HEK293 (cell line): ENCODE measurements at regions of chr15 and their contacts with region 1.

Region 1: DNA sequence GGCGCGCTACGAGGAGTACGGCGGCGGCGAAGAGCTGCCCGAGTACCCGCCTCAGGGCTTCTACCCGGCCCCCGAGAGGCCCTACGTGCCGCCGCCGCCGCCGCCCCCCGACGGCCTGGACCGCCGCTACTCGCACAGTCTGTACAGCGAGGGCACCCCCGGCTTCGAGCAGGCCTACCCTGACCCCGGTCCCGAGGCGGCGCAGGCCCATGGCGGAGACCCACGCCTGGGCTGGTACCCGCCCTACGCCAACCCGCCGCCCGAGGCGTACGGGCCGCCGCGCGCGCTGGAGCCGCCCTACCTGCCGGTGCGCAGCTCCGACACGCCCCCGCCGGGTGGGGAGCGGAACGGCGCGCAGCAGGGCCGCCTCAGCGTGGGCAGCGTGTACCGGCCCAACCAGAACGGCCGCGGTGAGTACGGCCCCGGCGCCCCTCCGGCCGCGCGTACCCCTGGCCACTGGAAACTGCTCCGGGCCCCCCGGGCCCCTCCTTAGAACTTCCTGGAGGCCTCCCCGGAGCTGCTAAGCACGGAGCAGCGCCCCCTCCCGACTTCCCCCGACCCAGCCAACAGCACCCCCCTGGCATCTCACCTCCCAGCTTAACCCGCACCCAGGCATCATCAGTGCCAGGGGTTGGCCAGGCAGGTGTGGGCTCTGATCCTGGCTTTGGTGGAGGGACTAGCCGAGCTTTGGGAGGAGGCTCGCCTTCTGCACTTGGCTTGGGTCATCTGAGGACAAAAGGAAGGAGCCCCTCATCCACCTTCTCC is 1.4 kb downstream of the LOXL1 start:
- H3K4me3 ChIP-seq: peak overlapping the region; percentile 49
- H3K27ac ChIP-seq: peak overlapping the region; percentile 75; the same call in 1 of the 2 replicates
- H3K4me1 ChIP-seq: peaks cover 20% of the 10 kb centered on the region
- CTCF ChIP-seq: peak; percentile 95

Region 2: GRCh38 chr15:73771380-73772045 is 156.1 kb before region 1 on chr15:
- CTCF ChIA-PET with region 1: no interaction called
- POLR2A ChIA-PET with region 1: no interaction called
- H3K4me3 ChIP-seq: no peak overlapping the region
- H3K27ac ChIP-seq: no peak overlapping the region
- H3K4me1 ChIP-seq: no peaks in the 10 kb centered on the region
- CTCF ChIP-seq: no peak

Region 3: GRCh38 chr15:73873889-73874511 is 53.7 kb before region 1 on chr15:
- CTCF ChIA-PET with region 1: interaction called, 12 read pairs
- POLR2A ChIA-PET with region 1: interaction called, 3 read pairs
- H3K4me3 ChIP-seq: no peak overlapping the region
- H3K27ac ChIP-seq: no peak overlapping the region
- H3K4me1 ChIP-seq: peaks cover 5% of the 10 kb centered on the region; the same call in 1 of the 2 replicates
- CTCF ChIP-seq: 0 out of 2 replicates have a peak, but pooled peaks have one; percentile 13

Region 4: DNA sequence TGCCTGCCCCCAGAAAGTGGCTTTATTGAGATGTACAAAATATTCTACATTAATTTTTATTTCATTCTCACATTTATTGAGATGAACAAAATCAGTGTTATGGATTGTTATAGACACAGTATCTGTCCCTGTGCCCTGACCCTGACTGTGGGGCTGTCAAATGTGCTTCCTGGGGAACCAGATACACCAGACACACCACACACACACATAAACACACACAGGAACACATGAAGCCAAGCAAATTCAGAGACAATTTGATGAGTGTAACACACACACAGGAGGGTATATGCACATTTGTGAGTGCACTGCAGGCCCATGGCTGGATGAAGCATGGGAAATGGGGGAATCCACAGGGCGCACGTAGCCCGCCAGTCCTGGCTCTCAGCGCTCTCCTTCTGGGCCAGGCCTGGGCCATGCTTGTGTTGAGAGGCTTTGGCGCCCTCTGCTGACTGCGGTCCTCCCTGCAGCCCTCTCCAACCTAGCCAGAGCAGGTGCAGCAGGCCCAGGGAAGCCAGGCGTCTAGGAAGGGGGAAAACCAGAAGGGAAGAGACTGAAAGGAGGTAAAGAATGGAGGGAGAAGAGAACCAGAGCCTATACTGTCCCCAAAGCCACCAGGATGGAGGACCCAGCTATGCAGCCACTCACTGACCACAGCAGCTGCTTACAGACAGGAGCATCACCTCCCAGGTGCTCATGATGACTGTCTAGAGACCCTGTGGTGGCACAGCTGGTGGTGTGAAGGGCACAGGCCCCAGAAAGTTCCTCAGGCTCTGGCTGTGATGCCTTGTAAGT is 19.4 kb before region 1 on chr15:
- CTCF ChIA-PET with region 1: interaction called, 14 read pairs
- POLR2A ChIA-PET with region 1: interaction called, 3 read pairs
- H3K4me3 ChIP-seq: no peak overlapping the region
- H3K27ac ChIP-seq: no peak overlapping the region
- H3K4me1 ChIP-seq: no peaks in the 10 kb centered on the region
- CTCF ChIP-seq: peak; percentile 93

Region 5: GRCh38 chr15:73941871-73942635 is 14.4 kb after region 1 on chr15:
- CTCF ChIA-PET with region 1: interaction called, 39 read pairs
- POLR2A ChIA-PET with region 1: interaction called, 17 read pairs
- H3K4me3 ChIP-seq: no peak overlapping the region
- H3K27ac ChIP-seq: no peak overlapping the region
- H3K4me1 ChIP-seq: peaks cover 3% of the 10 kb centered on the region; the same call in 1 of the 2 replicates
- CTCF ChIP-seq: no peak

Region 6: GRCh38 chr15:73964736-73965093 is 37.1 kb after region 1 on chr15:
- CTCF ChIA-PET with region 1: interaction called, 13 read pairs
- POLR2A ChIA-PET with region 1: no interaction called
- H3K4me3 ChIP-seq: no peak overlapping the region
- H3K27ac ChIP-seq: no peak overlapping the region
- H3K4me1 ChIP-seq: peaks cover 3% of the 10 kb centered on the region; the same call in 1 of the 2 replicates
- CTCF ChIP-seq: peak; percentile 98

Region 7: GRCh38 chr15:74123138-74123443 is 195.4 kb after region 1 on chr15:
- CTCF ChIA-PET with region 1: no interaction called
- POLR2A ChIA-PET with region 1: no interaction called
- H3K4me3 ChIP-seq: no peak overlapping the region
- H3K27ac ChIP-seq: no peak overlapping the region
- H3K4me1 ChIP-seq: peaks cover 14% of the 10 kb centered on the region
- CTCF ChIP-seq: no peak

Region 8: DNA sequence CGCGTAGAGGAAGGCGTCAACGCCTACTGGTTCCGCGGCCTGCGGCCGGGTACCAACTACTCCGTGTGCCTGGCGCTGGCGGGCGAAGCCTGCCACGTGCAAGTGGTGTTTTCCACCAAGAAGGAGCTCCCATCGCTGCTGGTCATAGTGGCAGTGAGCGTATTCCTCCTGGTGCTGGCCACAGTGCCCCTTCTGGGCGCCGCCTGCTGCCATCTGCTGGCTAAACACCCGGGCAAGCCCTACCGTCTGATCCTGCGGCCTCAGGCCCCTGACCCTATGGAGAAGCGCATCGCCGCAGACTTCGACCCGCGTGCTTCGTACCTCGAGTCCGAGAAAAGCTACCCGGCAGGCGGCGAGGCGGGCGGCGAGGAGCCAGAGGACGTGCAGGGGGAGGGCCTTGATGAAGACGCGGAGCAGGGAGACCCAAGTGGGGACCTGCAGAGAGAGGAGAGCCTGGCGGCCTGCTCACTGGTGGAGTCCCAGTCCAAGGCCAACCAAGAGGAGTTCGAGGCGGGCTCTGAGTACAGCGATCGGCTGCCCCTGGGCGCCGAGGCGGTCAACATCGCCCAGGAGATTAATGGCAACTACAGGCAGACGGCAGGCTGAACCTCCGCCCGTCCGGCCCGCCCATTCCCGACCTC is 206.8 kb after region 1 on chr15:
- CTCF ChIA-PET with region 1: no interaction called
- POLR2A ChIA-PET with region 1: no interaction called
- H3K4me3 ChIP-seq: no peak overlapping the region
- H3K27ac ChIP-seq: no peak overlapping the region
- H3K4me1 ChIP-seq: peaks cover 14% of the 10 kb centered on the region
- CTCF ChIP-seq: 0 out of 2 replicates have a peak, but pooled peaks have one; percentile 33